ENCODE measurements at regions of chr1 and their contacts with region 1.

Region 1: DNA sequence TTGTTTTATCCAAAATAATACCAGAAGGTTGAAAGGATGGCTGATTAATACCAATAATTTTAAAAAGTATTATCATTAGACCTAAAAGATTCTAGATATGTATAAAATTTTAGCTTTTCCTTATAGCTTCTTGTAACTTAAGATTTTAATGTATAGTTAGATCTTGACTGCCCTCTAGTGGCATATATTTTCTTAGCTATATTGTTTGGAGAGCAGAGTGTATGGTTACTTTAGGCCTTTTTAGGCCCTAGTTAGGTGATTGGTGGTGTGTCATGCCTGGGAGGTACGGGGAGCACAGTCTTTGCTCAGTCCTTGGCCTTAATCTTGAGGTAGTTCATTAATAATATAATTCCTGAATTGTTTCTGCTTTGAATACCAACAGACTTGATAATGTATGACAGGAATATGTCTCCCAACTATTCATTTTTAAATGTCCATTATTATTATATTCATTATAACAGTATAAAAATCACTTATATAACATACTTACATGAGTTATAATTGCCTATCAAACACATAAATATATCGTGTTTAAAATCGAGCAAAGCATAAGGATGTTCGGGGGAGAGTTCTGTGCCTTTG is 328.4 kb downstream of the ZP4 start:
- DNase-seq: peak; percentile 89
- H3K4me3 Mint-ChIP-seq: no peak overlapping the region
- H3K27ac Mint-ChIP-seq: no peak overlapping the region
- H3K4me1 Mint-ChIP-seq: no peaks in the 10 kb centered on the region
- H3K27me3 Mint-ChIP-seq: no peaks in the 10 kb centered on the region
- CTCF ChIP-seq: peak; percentile 79

Region 2: DNA sequence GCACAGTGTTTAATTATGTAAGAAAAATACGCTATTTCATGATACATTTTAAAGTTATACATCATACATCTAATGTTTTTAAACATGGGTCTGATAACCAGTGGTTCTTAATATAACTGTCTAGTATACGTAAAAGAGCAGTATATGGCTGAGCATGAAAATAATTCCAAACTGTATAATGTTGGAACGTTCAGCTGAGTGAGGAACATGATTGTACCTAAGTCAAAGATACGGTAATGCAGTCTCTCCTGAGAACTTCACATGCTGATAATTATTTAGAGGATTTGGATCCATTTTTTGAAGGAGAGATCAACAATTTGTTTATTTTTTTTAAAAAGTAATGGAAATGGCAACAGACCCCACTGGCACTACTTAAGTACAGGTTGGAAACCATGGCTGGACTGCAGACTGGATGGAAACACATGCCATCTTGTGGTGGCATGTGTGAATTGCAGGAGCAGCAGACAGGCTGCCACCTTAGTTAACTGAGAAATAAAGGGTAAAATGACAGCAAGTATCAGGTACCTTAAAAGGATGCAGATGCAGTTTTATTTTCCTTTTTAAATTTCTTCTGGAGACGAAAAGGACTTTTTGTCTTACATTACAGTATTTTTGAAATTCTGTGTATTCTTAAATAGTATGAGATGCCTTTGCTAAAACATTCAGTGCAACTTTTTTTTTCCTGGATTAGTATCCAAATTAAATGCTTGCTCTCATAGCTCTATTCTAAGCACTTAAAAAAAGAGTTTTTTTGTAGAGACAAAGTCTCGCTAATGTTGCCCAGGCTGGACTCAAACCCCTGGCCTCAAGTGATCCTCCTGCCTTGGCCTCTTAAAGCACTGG is 693.5 kb before region 1 on chr1:
- CTCF ChIA-PET with region 1: interaction called, 6 read pairs
- POLR2A ChIA-PET with region 1: interaction called, 4 read pairs
- intact Hi-C with region 1: loop called (anchors 5 kb)
- DNase-seq: peak; percentile 76
- H3K4me3 Mint-ChIP-seq: no peak overlapping the region
- H3K27ac Mint-ChIP-seq: no peak overlapping the region
- H3K4me1 Mint-ChIP-seq: peaks cover 5% of the 10 kb centered on the region
- H3K27me3 Mint-ChIP-seq: no peaks in the 10 kb centered on the region
- CTCF ChIP-seq: peak; percentile 99

Region 3: GRCh38 chr1:236978740-236979139 is 583.6 kb before region 1 on chr1:
- CTCF ChIA-PET with region 1: no interaction called
- POLR2A ChIA-PET with region 1: no interaction called
- intact Hi-C with region 1: loop called (anchors 10 kb)
- DNase-seq: no peak
- H3K4me3 Mint-ChIP-seq: no peak overlapping the region
- H3K27ac Mint-ChIP-seq: no peak overlapping the region
- H3K4me1 Mint-ChIP-seq: no peaks in the 10 kb centered on the region
- H3K27me3 Mint-ChIP-seq: peaks cover 11% of the 10 kb centered on the region
- CTCF ChIP-seq: no peak

Region 4: GRCh38 chr1:237528545-237528944 is 33.8 kb before region 1 on chr1:
- CTCF ChIA-PET with region 1: interaction called, 15 read pairs
- POLR2A ChIA-PET with region 1: interaction called, 3 read pairs
- intact Hi-C with region 1: no loop called
- DNase-seq: no peak
- H3K4me3 Mint-ChIP-seq: no peak overlapping the region
- H3K27ac Mint-ChIP-seq: no peak overlapping the region
- H3K4me1 Mint-ChIP-seq: peaks cover 7% of the 10 kb centered on the region
- H3K27me3 Mint-ChIP-seq: no peaks in the 10 kb centered on the region
- CTCF ChIP-seq: no peak

Region 5: GRCh38 chr1:237672748-237673147 is 110.4 kb after region 1 on chr1:
- CTCF ChIA-PET with region 1: interaction called, 3 read pairs
- POLR2A ChIA-PET with region 1: interaction called, 4 read pairs
- intact Hi-C with region 1: loop called (anchors 1 kb)
- DNase-seq: peak; percentile 65
- H3K4me3 Mint-ChIP-seq: no peak overlapping the region
- H3K27ac Mint-ChIP-seq: no peak overlapping the region
- H3K4me1 Mint-ChIP-seq: peaks cover 5% of the 10 kb centered on the region
- H3K27me3 Mint-ChIP-seq: no peaks in the 10 kb centered on the region
- CTCF ChIP-seq: peak; percentile 56

Region 6: DNA sequence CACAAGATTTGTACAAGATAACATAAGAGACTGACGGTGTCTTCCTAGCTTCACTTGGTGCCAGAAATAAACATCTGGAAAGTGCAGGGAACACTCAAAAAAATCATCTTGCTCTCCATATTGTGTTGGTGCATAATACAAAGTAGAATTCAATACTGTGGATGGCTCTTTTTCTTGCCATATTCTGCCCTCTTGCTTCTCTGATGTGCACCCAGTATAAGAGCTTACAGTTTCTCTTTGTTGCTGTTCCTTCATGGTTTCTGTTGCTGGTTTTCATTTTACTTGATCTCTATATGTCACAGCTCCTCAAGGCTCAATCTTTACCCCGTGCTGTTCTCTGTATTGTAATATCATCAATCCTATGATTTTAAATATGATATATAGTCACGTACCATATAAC is 856.9 kb after region 1 on chr1:
- CTCF ChIA-PET with region 1: no interaction called
- POLR2A ChIA-PET with region 1: no interaction called
- intact Hi-C with region 1: no loop called
- DNase-seq: no peak
- H3K4me3 Mint-ChIP-seq: no peak overlapping the region
- H3K27ac Mint-ChIP-seq: no peak overlapping the region
- H3K4me1 Mint-ChIP-seq: no peaks in the 10 kb centered on the region
- H3K27me3 Mint-ChIP-seq: no peaks in the 10 kb centered on the region
- CTCF ChIP-seq: no peak

Measured in MCF 10A (cell line).